CD8-positive, alpha-beta T cell (primary cell): ENCODE measurements at regions of chr12 and their contacts with region 1.

Region 1: DNA sequence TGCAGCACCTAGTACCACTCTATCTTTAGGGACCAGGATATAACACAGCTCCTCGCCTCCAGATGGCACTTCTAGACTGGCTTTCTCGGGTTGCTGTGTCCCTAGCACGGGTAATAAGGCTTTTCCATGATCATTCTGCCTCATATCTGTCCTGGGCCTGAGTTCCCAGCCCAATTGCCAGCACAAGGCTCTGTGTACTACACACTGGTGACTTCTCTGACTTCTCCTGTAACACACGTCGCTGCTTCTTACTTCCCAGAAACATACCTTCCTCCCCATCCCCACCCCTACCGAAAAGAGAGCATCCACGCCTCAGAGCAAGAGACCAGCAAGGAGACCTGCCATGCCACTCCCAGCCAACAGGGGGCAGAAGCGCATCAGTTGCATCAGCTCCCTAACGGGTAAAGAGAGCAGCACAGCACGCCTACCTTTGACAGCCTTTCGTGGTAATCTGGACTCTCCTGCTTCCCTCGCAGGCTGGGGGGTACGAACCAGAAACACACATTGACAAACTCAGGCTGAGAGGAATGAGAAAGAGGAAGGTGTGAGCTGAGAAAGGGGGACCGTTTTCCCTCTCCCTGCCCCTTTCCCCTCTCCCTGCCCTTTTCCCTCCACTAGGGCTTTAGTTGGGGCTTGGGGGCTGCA is 21.2 kb upstream of the ZNF740 start:
- DNase-seq: peak; percentile 81 to 94 (median 89)
- ATAC-seq: peak; percentile 100
- H3K4me3 ChIP-seq: no peak overlapping the region
- H3K4me3 Mint-ChIP-seq: no peak overlapping the region
- H3K27ac ChIP-seq: no peak overlapping the region
- H3K27ac Mint-ChIP-seq: peak overlapping the region; percentile 1
- H3K4me1 ChIP-seq: peaks cover 8% of the 10 kb centered on the region
- H3K4me1 Mint-ChIP-seq: peaks cover 6% of the 10 kb centered on the region
- H3K27me3 ChIP-seq: no peaks in the 10 kb centered on the region
- H3K27me3 Mint-ChIP-seq: no peaks in the 10 kb centered on the region
- CTCF ChIP-seq: peak; percentile 97

Region 2: DNA sequence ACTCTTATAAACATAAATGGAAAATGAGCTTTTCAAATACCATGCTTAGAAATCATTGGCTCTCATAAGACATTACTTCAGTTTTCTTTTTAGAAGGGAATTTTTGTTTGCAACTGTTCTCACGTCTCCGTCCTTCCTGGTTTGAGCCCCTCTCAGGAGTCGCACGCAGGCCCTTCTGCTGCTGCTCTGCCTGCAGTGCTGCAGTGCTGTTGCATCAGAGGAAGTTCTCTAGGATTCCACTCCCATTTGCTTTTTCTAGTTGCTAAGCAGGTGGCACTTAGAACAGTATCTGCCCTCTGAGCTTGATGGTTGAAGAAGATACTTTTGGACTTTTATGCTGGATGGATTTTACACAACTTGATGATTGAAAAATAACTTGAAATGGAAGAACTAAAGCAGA is 1497.5 kb before region 1 on chr12:
- CTCF ChIA-PET with region 1: no interaction called
- POLR2A ChIA-PET with region 1: no interaction called
- intact Hi-C with region 1: no loop called
- DNase-seq: no peak
- ATAC-seq: no peak
- H3K4me3 ChIP-seq: no peak overlapping the region
- H3K4me3 Mint-ChIP-seq: no peak overlapping the region
- H3K27ac ChIP-seq: no peak overlapping the region
- H3K27ac Mint-ChIP-seq: no peak overlapping the region
- H3K4me1 ChIP-seq: no peaks in the 10 kb centered on the region
- H3K4me1 Mint-ChIP-seq: no peaks in the 10 kb centered on the region
- H3K27me3 ChIP-seq: peaks cover 0 to 2% of the 10 kb centered on the region in 2 experiments
- H3K27me3 Mint-ChIP-seq: peaks cover 7% of the 10 kb centered on the region
- CTCF ChIP-seq: no peak

Region 3: GRCh38 chr12:53190108-53190729 is 30.9 kb after region 1 on chr12:
- CTCF ChIA-PET with region 1: interaction called, 40 read pairs
- POLR2A ChIA-PET with region 1: interaction called, 6 read pairs
- intact Hi-C with region 1: loop called (anchors 1 kb)
- DNase-seq: peak in 8 of 9 experiments; percentile 32 to 71 (median 66)
- ATAC-seq: peak; percentile 99
- H3K4me3 ChIP-seq: no peak overlapping the region
- H3K4me3 Mint-ChIP-seq: no peak overlapping the region
- H3K27ac ChIP-seq: peak overlapping the region in 1 of 2 experiments; percentile 29
- H3K27ac Mint-ChIP-seq: peak overlapping the region; percentile 66
- H3K4me1 ChIP-seq: peaks cover 10% of the 10 kb centered on the region
- H3K4me1 Mint-ChIP-seq: peaks cover 30% of the 10 kb centered on the region
- H3K27me3 ChIP-seq: no peaks in the 10 kb centered on the region
- H3K27me3 Mint-ChIP-seq: no peaks in the 10 kb centered on the region
- CTCF ChIP-seq: peak; percentile 47

Region 4: DNA sequence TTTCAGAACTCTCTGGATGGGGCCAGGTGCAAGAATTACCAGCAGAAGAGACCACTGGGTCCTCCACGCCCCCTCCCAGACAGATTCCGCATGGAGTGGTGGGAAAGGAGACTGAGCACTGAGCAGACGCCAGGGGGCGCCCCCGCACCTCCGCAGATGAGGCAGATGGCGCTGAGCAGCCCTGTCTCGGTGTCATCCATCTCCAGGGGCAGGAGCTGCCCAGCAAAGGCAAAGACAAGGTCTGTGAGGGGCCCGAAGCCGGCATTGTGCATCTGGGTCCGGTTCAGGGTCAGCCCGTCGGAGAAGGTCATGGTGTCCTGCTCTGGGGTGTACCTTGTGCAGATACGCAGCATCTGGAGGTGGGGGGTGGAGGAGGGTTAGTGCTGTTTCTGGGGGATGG is 54.0 kb after region 1 on chr12:
- CTCF ChIA-PET with region 1: interaction called, 51 read pairs
- POLR2A ChIA-PET with region 1: no interaction called
- intact Hi-C with region 1: loop called in 1 of 2 experiments (anchors 1 kb)
- DNase-seq: peak; percentile 59 to 92 (median 85)
- ATAC-seq: peak; percentile 74
- H3K4me3 ChIP-seq: no peak overlapping the region
- H3K4me3 Mint-ChIP-seq: no peak overlapping the region
- H3K27ac ChIP-seq: no peak overlapping the region
- H3K27ac Mint-ChIP-seq: peak overlapping the region; percentile 80
- H3K4me1 ChIP-seq: peaks cover 55% of the 10 kb centered on the region
- H3K4me1 Mint-ChIP-seq: peaks cover 62% of the 10 kb centered on the region
- H3K27me3 ChIP-seq: no peaks in the 10 kb centered on the region
- H3K27me3 Mint-ChIP-seq: no peaks in the 10 kb centered on the region
- CTCF ChIP-seq: peak; percentile 85

Region 5: GRCh38 chr12:53267999-53268647 is 108.8 kb after region 1 on chr12 and contains the start of gene ESPL1:
- CTCF ChIA-PET with region 1: interaction called, 54 read pairs
- POLR2A ChIA-PET with region 1: interaction called, 7 read pairs
- intact Hi-C with region 1: loop called (anchors 1 kb)
- DNase-seq: peak; percentile 67 to 94 (median 84)
- ATAC-seq: peak; percentile 95
- H3K4me3 ChIP-seq: peak within 1 kb of the TSS; percentile 66 to 69
- H3K4me3 Mint-ChIP-seq: peak within 1 kb of the TSS; percentile 97
- H3K27ac ChIP-seq: peak within 1 kb of the TSS; percentile 25 to 68
- H3K27ac Mint-ChIP-seq: peak within 1 kb of the TSS; percentile 94
- H3K4me1 ChIP-seq: peaks cover 5% of the 10 kb centered on the region
- H3K4me1 Mint-ChIP-seq: peaks cover 17% of the 10 kb centered on the region
- H3K27me3 ChIP-seq: no peaks in the 10 kb centered on the region
- H3K27me3 Mint-ChIP-seq: no peaks in the 10 kb centered on the region
- CTCF ChIP-seq: peak; percentile 45
- total RNA-seq, gene ESPL1: 0.56 to 1.7 TPM

Region 6: DNA sequence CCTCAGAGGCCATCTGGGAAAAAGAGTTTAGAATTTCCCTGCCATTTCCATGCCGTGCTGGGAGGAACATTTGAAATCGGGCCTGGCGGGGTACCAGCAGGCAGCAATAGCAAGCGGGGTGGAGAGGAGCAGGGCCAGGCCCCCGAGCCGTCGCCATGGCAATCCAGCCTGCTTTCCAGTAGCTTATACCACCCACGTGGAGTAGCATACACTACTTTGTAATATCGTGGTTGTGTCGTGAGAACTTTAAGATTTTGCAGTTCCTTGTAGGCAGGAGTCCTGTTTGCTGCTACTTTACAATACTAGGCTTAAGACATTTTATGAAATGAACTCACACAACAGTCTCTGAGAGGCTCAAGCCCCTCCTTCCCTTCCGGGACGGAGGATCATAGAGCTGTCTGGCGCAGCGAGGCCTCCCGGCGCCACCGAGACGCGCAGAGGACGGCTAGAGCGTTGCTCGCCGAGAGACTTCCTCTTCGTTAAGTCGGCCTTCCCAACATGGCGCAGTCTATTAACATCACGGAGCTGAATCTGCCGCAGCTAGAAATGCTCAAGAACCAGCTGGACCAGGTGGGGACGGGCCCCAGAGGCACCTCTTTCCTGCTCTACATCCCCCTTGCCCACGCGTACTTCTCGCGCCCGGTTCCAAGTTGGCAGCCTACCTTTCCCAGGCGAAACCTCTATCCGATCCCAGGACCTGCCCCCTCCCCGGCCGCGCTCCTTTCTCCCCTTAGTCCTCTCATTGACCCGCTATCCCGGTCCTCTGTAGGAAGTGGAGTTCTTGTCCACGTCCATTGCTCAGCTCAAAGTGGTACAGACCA is 136.0 kb after region 1 on chr12 and contains the start of gene PFDN5:
- CTCF ChIA-PET with region 1: interaction called, 132 read pairs
- POLR2A ChIA-PET with region 1: interaction called, 6 read pairs
- intact Hi-C with region 1: no loop called
- DNase-seq: peak; percentile 72 to 95 (median 87)
- ATAC-seq: peak; percentile 92
- H3K4me3 ChIP-seq: peak within 1 kb of the TSS; percentile 75 to 88
- H3K4me3 Mint-ChIP-seq: peak within 1 kb of the TSS; percentile 99
- H3K27ac ChIP-seq: peak within 1 kb of the TSS; percentile 80 to 82
- H3K27ac Mint-ChIP-seq: peak within 1 kb of the TSS; percentile 99
- H3K4me1 ChIP-seq: peaks cover 28% of the 10 kb centered on the region
- H3K4me1 Mint-ChIP-seq: peaks cover 51% of the 10 kb centered on the region
- H3K27me3 ChIP-seq: no peaks in the 10 kb centered on the region
- H3K27me3 Mint-ChIP-seq: no peaks in the 10 kb centered on the region
- CTCF ChIP-seq: no peak
- total RNA-seq, gene PFDN5: 741 to 751 TPM